AG04449 (cell line): ENCODE measurements at regions of chr7 and their contacts with region 1.

Region 1: DNA sequence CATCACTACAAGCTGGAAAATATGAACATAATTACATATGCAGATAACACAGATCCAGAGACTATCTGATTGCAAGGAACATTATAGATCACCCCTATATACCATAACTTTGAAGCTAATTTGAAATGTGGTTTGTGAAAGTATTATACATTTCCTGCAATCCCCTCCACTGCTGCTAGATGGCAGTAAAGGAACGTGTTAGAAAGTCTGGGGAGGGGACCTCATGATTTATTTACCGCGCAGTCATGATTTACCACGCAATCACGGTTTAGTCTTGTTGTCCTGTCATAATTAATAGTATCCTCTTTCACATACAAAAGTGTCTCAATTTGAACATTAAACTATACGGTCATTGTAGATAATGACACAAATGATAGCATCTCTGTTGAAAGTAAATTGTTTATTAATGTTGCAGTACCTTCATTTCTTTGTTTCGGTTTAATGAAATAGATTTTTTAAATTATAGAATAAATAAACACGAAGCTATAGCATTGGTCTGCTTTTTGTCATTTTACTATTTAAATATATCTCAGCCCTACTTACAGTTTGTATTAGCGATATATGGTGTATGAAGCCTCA is 145.3 kb upstream of the PRSS1 start:
- DNase-seq: no peak
- H3K4me3 ChIP-seq: no peak overlapping the region; the same call in 1 of the 2 replicates
- CTCF ChIP-seq: peak; percentile 70

Region 2: GRCh38 chr7:142523821-142524460 is 80.0 kb before region 1 on chr7:
- CTCF ChIA-PET with region 1: interaction called, 10 read pairs
- POLR2A ChIA-PET with region 1: no interaction called
- DNase-seq: no peak
- H3K4me3 ChIP-seq: no peak overlapping the region
- CTCF ChIP-seq: no peak

Region 3: GRCh38 chr7:142581346-142581745 is 22.6 kb before region 1 on chr7:
- CTCF ChIA-PET with region 1: interaction called, 15 read pairs
- POLR2A ChIA-PET with region 1: no interaction called
- DNase-seq: no peak
- H3K4me3 ChIP-seq: no peak overlapping the region
- CTCF ChIP-seq: no peak